ENCODE measurements at regions of chr18 and their contacts with region 1.

Region 1: DNA sequence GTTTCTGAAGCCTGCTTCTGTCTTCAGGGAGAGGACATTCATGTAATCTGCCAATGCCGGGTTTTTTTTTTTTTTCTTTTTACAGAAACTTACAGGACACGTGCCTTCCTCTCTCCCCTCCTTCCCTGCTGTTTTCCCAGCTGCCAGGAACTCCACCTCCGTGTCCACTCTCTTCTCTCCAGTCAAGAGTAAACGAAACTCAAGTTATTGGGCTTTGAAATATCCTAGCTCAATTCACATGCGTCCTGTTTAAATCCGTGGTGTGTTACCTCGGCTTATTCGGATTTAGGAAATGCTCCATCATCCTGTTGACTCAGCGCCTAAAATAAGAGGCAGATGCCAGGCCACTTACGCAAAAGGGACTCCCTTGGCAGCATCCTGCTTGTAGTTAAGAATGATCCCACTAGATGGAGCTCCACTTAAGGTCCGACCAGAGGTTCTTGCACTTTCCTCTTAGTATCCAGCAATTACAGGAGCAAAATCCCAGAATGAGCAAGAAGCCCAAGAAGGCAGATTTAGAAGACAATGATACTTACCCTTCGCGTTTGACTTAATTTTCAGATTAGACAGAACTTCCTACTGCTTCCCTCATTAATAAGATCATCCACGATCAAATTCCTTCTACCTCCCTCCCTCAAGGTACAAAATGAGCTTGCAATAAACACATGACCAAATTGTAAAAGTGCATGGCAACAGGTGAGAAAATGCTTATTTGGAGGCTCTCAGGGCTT is 97.2 kb upstream of the ZCCHC2 start:
- DNase-seq: peak; percentile 91
- H3K4me3 ChIP-seq: no peak overlapping the region
- H3K27ac ChIP-seq: peak overlapping the region; percentile 47
- H3K4me1 ChIP-seq: peaks cover 4% of the 10 kb centered on the region
- H3K27me3 ChIP-seq: no peaks in the 10 kb centered on the region
- CTCF ChIP-seq: peak; percentile 81

Region 2: DNA sequence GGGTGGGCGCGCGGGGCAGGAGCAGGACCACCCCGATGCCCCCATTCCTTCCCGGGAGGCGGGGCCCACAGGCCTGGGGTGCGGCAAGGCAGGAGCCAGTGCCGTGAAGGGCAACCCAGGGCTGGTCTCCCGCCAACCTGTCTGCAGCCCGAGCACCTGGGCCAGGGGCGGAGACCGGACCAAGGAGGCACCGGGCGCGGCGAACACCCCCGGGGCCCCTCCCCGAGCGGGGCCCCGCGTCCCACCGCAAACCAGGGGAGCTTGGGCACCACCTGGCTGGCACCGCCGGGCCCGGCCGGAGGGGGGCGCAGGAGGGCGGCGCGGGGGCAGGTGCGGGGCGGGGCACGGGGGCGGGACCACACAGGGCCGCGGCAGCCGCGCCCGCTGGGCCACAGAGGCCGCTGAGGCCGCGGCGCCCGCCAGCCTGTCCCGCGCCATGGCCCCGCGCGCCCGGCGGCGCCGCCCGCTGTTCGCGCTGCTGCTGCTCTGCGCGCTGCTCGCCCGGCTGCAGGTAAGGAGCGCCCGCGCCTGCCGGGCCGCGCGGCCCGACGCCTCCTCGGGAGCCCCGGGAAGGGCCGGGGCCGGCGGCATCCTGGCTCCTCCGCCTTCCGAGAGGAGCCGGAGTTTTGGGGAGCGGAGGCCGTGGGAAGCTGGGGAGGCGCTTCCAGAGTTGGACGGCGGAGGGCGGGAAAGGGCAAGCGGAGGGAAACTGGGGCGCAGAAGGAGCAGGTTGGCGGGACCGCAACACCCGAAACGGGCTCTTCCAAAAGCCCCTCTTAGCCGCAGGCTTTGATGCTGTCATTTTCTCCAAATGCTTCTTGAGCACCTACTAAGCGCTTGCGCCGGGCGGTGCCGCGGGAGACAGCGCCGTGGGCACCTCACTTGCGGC is 100.5 kb before region 1 on chr18 and contains the start of gene TNFRSF11A:
- intact Hi-C with region 1: loop called (anchors 2 kb)
- DNase-seq: peak; percentile 80
- H3K4me3 ChIP-seq: peak within 1 kb of the TSS; percentile 55
- H3K27ac ChIP-seq: peak within 1 kb of the TSS; percentile 87
- H3K4me1 ChIP-seq: peaks cover 6% of the 10 kb centered on the region
- H3K27me3 ChIP-seq: peaks cover 8% of the 10 kb centered on the region
- CTCF ChIP-seq: no peak
- total RNA-seq, gene TNFRSF11A: 80.6 to 86.6 TPM

Region 3: GRCh38 chr18:62339106-62339988 is 86.3 kb before region 1 on chr18:
- intact Hi-C with region 1: no loop called
- DNase-seq: peak; percentile 56
- H3K4me3 ChIP-seq: no peak overlapping the region
- H3K27ac ChIP-seq: peak overlapping the region; percentile 53
- H3K4me1 ChIP-seq: peaks cover 4% of the 10 kb centered on the region
- H3K27me3 ChIP-seq: no peaks in the 10 kb centered on the region
- CTCF ChIP-seq: no peak

Region 4: GRCh38 chr18:62545098-62545497 is 119.5 kb after region 1 on chr18:
- intact Hi-C with region 1: no loop called
- DNase-seq: no peak
- H3K4me3 ChIP-seq: no peak overlapping the region
- H3K27ac ChIP-seq: no peak overlapping the region
- H3K4me1 ChIP-seq: no peaks in the 10 kb centered on the region
- H3K27me3 ChIP-seq: no peaks in the 10 kb centered on the region
- CTCF ChIP-seq: no peak

Region 5: DNA sequence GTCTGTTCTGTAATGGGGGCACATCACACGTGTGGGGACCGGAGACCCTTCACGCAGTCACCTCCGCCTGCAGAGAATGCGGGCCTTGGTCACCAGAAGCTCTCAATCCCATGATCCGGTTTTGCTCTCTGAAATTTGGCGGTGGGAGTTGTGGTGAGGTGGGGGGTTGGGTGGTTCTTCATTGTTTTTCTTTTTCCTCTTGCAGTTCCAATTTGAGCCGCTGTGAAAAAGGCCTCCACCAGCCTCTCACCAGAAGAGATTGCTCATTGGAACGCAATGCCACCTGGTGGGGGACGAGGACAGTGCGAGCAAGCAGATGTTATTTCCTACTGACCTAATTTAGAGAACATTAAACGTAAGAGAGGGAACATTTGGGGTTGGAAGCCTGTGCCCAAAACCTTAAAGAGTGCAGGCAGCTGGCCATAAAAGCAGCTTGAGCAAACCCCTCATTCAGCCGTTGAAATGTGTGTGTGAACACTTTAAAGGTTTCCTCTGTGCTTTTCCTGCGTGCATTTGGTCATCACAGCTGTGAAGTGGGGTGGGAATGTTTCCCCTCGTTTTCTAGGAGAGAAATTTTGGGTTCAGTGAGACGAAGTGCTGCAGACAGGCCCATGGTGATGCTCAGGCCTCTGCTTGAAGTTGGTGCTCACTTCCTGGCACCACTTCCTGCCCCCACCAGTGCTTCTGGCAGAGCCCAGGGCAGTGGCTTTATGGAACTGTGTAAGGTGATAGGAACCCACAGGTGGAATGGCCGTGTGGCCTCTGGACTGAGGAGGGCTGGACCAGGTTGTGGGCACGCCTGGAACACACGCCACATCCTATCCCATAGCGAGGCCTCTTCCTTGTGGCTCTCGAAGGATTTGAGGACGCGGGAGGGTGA is 158.9 kb after region 1 on chr18:
- intact Hi-C with region 1: loop called (anchors 1 kb)
- DNase-seq: peak; percentile 89
- H3K4me3 ChIP-seq: no peak overlapping the region
- H3K27ac ChIP-seq: no peak overlapping the region
- H3K4me1 ChIP-seq: no peaks in the 10 kb centered on the region
- H3K27me3 ChIP-seq: no peaks in the 10 kb centered on the region
- CTCF ChIP-seq: peak; percentile 96